ENCODE measurements at regions of chr11 and their contacts with region 1.

Region 1: DNA sequence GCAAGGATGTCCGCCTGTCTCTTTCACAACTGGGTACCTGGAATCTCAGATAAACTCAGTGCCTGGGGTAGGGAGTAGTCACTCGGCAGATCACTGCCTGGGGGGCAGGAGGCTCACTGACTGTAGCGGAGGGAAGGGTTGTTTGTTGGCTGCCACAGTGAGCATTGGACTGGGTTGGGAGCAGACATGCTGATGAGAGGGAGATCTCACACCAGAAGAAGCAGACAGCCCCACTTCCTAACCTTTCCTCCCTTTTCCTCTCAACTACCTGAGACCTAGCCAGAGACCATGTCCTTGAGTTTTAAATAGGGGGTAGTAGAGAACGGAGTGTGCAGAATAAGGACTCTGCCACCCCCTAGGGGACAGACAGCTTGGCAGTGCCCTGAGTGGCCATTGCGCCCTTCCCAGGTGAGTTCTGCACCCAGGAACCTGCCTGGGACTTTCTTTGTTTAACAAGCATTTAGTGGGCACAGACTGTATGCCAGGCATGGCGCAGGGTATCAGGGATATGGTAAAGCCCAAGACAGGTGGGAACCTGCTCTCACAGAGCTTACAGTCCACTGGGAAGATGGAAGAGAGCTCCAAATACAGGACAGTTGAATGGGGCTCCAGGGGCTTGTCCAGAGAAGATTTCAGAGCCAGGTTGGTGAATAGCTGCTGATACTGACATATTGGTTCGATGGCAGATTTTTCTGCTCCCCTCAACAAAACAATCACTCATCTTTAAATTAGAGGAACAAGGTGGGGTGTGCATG is 115.7 kb upstream of the NNMT start:
- DNase-seq: peak; percentile 53
- H3K4me3 Mint-ChIP-seq: no peak overlapping the region
- H3K27ac Mint-ChIP-seq: no peak overlapping the region
- H3K4me1 Mint-ChIP-seq: peaks cover 64% of the 10 kb centered on the region
- H3K27me3 Mint-ChIP-seq: no peaks in the 10 kb centered on the region

Region 2: DNA sequence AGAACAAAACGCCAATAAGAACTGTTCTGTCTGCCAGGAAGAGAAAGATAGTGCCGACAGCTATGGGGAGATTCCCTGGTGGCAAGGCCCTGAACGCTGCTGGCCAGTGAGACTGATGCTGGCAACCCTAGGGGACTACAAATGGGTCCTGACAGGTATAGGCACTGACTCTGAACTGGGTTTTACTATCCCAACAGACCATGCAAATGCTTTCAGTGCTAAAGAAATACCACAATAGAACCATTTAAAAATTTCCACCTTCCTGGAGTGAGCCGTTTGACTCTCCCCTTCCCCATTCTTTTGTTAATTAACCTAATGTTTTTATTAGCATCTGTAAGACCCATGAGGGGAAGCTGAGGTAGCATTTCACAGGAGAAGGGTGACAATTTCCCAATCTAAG is 330.8 kb before region 1 on chr11:
- CTCF ChIA-PET with region 1: no interaction called
- intact Hi-C with region 1: no loop called
- DNase-seq: no peak
- H3K4me3 Mint-ChIP-seq: no peak overlapping the region
- H3K27ac Mint-ChIP-seq: no peak overlapping the region
- H3K4me1 Mint-ChIP-seq: no peaks in the 10 kb centered on the region
- H3K27me3 Mint-ChIP-seq: no peaks in the 10 kb centered on the region

Region 3: GRCh38 chr11:113875234-113876073 is 305.0 kb before region 1 on chr11 and contains the start of gene USP28:
- CTCF ChIA-PET with region 1: no interaction called
- intact Hi-C with region 1: loop called (anchors 5 kb)
- DNase-seq: peak; percentile 71
- H3K4me3 Mint-ChIP-seq: peak within 1 kb of the TSS; percentile 95
- H3K27ac Mint-ChIP-seq: peak within 1 kb of the TSS; percentile 87
- H3K4me1 Mint-ChIP-seq: peaks cover 34% of the 10 kb centered on the region
- H3K27me3 Mint-ChIP-seq: no peaks in the 10 kb centered on the region
- total RNA-seq, gene USP28: 26.1 to 26.8 TPM

Region 4: GRCh38 chr11:113994077-113994954 is 186.2 kb before region 1 on chr11:
- CTCF ChIA-PET with region 1: interaction called, 3 read pairs
- intact Hi-C with region 1: loop called (anchors 1 kb)
- DNase-seq: peak; percentile 42
- H3K4me3 Mint-ChIP-seq: no peak overlapping the region
- H3K27ac Mint-ChIP-seq: no peak overlapping the region
- H3K4me1 Mint-ChIP-seq: no peaks in the 10 kb centered on the region
- H3K27me3 Mint-ChIP-seq: peaks cover 21% of the 10 kb centered on the region

Region 5: DNA sequence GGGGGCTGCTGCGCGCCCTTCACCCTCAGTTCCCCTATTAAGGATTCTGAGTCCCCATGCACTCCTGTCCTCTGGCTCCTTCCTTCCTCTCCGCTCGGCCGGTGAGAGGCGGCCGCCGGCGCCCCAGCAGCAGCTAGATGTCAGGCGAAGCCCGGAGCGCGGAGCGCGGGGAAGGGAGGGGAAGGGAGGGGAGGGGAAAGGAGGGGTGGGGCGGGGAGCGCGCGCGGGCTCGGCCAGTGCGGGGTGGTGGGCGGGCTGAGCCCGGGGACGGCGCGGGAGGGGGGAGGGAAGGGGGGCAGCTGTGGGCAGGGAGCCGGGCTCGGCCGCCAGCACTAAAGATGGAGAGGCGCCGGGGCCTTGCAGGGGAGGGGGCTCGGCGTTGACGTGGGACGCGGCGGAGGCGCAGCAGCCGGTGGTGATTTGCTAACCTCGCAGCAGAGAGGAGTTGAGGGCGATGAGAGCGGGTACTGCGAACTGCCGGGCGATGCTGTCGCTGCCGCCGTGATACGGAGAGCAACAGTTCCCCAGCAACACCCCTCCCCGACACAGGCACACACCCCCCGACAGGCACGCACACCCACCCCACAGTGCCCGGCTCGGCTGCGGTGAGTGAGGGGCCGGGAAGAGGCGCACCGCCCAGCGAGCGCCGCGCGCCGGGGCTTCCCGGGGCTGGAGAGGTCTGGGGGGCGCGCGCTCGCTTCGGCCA is 121.0 kb before region 1 on chr11 and contains the start of gene ZBTB16:
- CTCF ChIA-PET with region 1: interaction called, 5 read pairs
- intact Hi-C with region 1: loop called (anchors 1 kb)
- DNase-seq: peak; percentile 76
- H3K4me3 Mint-ChIP-seq: peak within 1 kb of the TSS; percentile 83
- H3K27ac Mint-ChIP-seq: no peak within 1 kb of the TSS
- H3K4me1 Mint-ChIP-seq: peaks cover 8% of the 10 kb centered on the region
- H3K27me3 Mint-ChIP-seq: peaks cover 24% of the 10 kb centered on the region
- total RNA-seq, gene ZBTB16: 1.5 to 2.3 TPM

Region 6: DNA sequence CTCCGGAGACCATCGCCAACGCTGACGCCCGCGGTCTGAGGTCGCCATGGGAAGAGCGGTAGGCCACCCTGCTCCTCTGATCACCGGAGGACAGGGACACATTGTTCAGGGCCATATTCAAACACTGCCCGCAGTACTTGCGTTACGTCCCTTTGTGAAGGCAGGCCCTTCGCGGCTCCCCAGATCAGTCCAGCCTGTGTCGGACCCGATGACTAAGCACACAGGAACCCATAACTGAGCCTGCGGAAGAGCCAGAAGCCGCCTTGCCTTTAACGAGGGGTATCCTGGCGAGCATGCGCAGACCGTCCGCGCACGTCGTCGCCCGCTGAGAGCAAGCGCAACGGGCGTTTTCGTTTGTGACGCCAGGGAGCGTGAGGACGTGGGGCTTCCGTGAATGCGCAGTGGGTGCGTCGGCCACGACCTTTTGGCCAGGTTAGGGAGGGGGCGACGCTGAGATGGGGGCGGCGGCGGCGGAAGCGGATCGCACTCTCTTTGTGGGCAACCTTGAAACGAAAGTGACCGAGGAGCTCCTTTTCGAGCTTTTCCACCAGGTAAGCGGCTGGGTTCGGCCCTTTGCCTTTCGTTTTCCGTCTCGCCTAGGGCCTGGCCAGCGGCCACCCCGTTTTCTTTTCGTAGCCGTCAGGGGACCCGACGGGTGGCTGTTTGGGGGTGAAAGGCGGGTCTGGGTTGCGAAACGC is 219.9 kb after region 1 on chr11 and contains the starts of genes C11orf71 and RBM7:
- CTCF ChIA-PET with region 1: no interaction called
- intact Hi-C with region 1: loop called (anchors 10 kb)
- DNase-seq: peak; percentile 98
- H3K4me3 Mint-ChIP-seq: peak within 1 kb of the TSS; percentile 90
- H3K27ac Mint-ChIP-seq: peak within 1 kb of the TSS; percentile 97
- H3K4me1 Mint-ChIP-seq: peaks cover 44% of the 10 kb centered on the region
- H3K27me3 Mint-ChIP-seq: no peaks in the 10 kb centered on the region
- total RNA-seq, gene C11orf71: 7.5 to 7.6 TPM
- total RNA-seq, gene RBM7: 36.9 to 41.7 TPM

Measured in activated naive CD4-positive, alpha-beta T cell treated with anti-CD3 and anti-CD28 coated beads for 36 hours (primary cell).